Cardiac septum (tissue), 1 donor: ENCODE measurements at regions of chr21 and their contacts with region 1.

Region 1: DNA sequence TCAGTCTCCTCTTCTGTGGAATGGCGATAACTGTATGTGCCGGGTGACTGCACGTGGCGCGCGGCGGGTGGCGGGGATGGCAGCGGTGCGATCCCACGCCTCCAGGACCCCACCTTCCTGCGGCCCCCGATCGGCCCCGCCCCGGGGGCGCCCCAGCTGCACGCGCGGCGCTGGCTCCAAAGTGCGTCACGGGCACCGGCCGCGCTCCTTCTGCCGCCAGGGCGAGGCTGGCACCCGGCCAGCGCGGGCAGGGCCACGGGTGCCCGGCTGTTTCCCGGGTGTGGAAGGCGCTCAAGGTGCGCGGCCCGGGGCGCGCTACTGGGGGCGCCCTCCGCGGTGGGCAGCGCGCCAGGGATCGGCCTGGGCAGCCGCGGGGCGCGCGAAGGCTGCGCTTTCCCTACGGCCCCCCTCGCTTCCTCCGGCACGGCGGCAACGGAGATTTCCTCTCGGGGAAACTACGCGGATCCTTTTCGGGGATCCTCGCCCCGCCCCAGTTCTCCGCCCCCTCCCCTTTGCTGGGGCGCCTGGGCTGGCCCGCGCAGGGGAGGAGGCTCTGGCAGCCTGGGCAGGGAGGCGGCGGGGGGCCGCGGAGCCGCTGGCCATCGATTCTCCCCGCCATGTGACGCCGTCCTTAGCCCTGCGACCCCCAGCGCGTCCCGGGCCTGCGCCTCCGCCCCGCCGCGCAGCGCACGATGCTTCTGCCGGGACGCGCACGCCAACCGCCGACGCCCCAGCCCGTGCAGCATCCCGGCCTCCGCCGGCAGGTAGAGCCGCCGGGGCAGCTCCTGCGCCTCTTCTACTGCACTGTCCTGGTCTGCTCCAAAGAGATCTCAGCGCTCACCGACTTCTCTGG is at the start of gene EVA1C:
- DNase-seq: peak; percentile 79
- total RNA-seq, gene EVA1C: 15.4 TPM

Region 2: GRCh38 chr21:32348654-32349587 is 63.5 kb before region 1 on chr21:
- intact Hi-C with region 1: no loop called
- DNase-seq: peak; percentile 51

Region 3: DNA sequence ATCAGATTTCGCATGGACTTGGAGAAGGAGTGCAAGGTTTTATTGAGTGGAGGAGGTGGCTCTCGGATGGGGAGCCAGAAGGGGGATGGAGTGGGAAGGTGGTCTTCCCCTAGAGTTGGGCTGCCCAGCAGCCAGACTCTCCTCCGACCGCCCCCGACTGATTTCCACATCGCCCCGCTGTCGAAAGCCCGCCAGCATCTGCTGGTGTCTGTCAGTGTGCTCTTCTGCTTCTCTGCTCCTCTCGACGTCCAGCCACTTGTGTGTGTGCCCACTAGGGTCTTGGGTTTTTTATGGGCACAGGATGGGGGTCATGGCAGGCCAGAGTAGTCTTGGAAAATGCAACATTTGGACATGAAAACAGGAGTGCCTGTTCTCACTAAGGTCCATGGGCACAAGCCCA is 40.3 kb after region 1 on chr21:
- intact Hi-C with region 1: loop called (anchors 5 kb)
- DNase-seq: no peak

Region 4: DNA sequence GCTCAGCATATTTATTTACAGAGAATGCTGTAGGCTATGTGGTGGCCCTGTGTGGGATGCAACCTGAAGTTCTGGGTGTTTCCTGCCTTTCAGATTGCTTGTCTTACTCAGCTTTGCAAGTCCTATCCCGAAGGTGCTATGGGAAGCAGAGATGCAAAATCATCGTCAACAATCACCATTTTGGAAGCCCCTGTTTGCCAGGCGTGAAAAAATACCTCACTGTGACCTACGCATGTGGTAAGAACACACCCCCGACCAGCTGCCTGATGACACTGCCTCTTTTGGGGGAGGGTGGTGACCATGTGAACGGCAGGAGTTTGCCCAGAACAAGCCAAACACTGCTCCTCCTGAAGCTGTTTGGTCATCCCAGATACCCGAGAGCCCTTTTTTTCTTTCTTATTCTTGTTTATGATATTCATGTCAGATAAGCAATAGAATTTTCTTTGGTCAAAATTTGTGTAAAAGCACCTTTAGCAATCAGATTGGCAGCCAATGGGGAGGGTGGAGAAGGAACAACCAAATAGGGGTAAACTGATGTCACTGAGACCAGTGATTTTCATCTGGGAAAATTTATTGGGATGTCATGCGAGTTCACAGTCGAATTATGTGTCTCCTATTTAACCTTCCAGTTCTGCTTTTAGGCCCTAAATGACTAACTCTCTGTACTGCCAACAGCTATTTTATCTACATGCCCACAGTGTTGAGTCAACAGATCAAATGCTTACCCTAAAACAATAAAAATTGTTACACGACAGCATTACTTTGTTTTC is 82.7 kb after region 1 on chr21:
- intact Hi-C with region 1: loop called (anchors 5 kb)
- DNase-seq: no peak

Region 5: DNA sequence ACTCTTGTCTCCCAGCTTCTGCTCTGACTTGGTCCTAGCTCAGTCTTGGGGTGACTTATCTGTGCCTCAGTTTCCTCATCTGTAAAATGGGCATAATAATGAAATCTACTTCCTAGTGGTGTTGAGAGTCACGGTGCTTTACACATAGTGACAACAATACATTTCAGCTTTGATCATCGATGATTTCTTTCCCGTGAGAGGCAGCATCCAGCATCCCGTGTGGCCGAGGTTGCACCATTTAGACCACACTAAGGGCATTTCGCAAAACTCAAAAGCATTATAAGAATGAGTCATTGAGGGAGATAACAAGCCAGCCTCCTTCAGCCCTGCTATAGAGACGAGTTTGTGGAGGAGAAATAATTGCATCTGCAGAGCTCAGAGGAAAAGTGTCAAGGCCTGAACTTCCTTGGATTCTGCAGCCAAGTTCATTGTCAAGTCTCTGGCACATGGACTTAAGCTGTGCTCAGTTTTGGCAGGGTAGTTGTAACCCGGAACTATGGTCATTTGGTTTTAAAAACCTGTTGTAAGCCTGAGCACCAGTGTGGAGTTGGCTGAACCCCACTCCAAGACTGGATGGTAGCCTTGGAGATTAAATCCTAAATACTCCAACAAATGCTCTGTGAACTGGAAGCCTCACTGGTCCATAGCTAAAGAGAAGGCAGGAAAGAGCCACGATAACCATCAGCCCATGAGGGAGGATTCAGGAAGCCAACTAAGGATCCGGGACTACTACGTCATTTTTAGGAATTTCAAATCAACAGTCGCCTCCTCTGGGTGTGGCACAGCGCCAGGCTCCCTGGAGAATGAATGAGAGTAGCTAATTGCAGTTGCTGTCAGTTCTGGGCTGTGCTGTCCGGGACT is 108.7 kb after region 1 on chr21:
- intact Hi-C with region 1: loop called (anchors 1 kb)
- DNase-seq: peak; percentile 88

Region 6: GRCh38 chr21:32569261-32570230 is 157.2 kb after region 1 on chr21:
- intact Hi-C with region 1: loop called (anchors 2 kb)
- DNase-seq: peak; percentile 82